ENCODE measurements at regions of chr22 and their contacts with region 1.

Region 1: DNA sequence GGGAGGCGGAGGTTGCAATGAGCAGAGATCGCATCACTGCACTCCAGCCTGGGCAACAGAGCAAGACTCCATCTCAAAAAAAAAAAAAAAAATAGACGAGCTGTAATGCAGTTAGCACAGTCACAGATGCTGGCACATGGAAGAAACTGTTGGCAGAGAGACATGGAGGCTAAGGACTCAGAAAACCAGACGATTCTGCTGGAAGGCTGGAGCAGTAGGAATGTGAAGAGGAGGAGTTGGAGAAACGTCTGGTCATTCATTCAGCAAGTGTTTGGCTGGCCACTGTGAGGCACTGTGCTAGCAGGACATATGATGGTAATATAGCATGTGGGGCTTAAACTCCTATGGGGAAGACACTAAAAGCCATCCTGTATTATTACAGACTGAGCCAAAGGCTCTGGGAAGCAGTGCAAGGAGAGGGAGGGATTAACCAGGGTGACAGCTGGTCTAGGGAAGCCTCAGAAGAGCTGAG is 5.0 kb downstream of the UQCR10 start:
- DNase-seq: peak; percentile 24 to 53
- H3K4me3 ChIP-seq: no peak overlapping the region
- H3K27ac ChIP-seq: no peak overlapping the region
- H3K4me1 ChIP-seq: peaks cover 12% of the 10 kb centered on the region in 2 donors
- H3K27me3 ChIP-seq: no peaks in the 10 kb centered on the region
- CTCF ChIP-seq: peak in 2 of 6 experiments; percentile 28 to 36
- POLR2A ChIP-seq: no peak

Region 2: DNA sequence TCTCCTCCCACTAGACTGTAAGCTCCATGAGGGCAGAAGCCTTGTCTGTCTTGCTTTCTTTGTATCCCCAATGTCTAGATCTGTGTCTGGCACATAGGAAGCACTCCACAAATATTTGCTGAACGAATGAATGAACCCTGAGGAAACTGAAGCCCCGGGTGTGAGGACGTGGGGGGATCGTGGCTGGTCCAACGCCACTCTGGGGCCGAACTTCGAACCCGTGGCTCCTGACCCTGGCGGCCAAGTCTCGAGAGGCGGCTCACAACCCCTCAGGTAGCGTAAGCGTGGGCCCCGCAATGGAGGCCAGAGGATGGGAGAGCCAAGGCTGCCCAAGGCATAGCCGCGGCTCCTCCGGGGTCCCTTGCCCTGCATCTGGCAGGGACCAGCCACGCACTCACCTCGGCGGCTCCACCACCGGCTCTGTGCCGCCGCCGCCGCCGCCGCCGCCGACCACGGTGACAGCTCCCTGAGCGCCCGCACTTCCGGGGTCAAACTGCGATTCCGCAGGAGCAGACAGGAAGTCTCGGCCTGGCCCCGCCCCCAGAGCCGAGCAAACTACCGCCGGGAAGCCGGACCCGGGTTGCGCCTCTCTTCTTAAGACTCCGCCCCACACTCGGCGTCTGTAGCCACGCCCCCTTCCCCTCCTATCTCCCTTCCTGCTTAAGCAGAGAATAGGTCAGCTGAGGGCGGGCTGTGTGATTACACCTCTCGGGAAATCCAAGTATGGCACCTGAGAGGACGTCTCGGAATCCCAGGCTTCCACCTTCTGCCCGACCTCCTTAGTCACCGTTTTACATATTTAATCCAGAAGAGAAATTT is 65.8 kb after region 1 on chr22 and contains the start of gene ASCC2:
- intact Hi-C with region 1: loop called (anchors 5 kb)
- DNase-seq: peak; percentile 100
- H3K4me3 ChIP-seq: peak within 1 kb of the TSS; percentile 62 to 90 (median 87)
- H3K27ac ChIP-seq: peak within 1 kb of the TSS; percentile 72 to 79 (median 77)
- H3K4me1 ChIP-seq: peaks cover 7 to 18% of the 10 kb centered on the region in 2 donors
- H3K27me3 ChIP-seq: no peaks in the 10 kb centered on the region
- CTCF ChIP-seq: peak in 3 of 6 experiments; percentile 33 to 50 (median 45)
- POLR2A ChIP-seq: peak in 1 of 2 donors; percentile 82
- total RNA-seq, gene ASCC2: 47.6 to 66.8 (median 51.3) TPM